PC-3 (cell line): ENCODE measurements at regions of chr15 and their contacts with region 1.

Region 1: GRCh38 chr15:57231559-57231958 is 144.7 kb upstream of the CGNL1 start:
- DNase-seq: no peak
- ATAC-seq: peak; percentile 42; the same call in 1 of the 2 replicates
- H3K4me3 ChIP-seq: no peak overlapping the region
- H3K27ac ChIP-seq: no peak overlapping the region
- H3K4me1 ChIP-seq: no peaks in the 10 kb centered on the region
- H3K27me3 ChIP-seq: no peaks in the 10 kb centered on the region
- CTCF ChIP-seq: no peak

Region 2: DNA sequence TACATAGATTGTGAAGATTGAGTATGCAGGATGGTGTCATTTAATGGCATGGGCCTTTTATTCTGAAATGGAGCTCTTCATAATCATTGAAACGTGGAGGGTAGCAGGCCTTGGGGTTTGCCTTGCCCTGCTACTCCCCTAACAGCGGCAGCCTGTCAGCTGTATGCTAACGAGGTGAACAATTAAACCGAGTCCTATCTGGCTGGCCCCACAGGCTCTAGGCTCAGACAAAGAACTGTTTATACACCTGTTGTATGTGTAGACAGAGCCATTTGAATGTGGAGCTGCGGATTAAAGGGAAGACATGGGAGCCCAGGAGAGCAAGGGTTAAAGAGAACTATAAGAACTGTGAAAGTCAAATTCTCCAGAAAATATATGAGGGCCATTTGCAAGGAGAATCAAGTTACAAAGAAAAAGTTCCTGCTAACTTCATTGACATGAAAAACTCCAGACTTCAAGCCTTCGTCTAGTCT is 28.0 kb after region 1 on chr15:
- CTCF ChIA-PET with region 1: no interaction called
- POLR2A ChIA-PET with region 1: no interaction called
- intact Hi-C with region 1: loop called (anchors 1 kb)
- DNase-seq: no peak
- ATAC-seq: no peak
- H3K4me3 ChIP-seq: no peak overlapping the region
- H3K27ac ChIP-seq: no peak overlapping the region
- H3K4me1 ChIP-seq: no peaks in the 10 kb centered on the region
- H3K27me3 ChIP-seq: no peaks in the 10 kb centered on the region
- CTCF ChIP-seq: no peak